ENCODE measurements at regions of chr16 and their contacts with region 1.

Region 1: GRCh38 chr16:69754469-69755310 is at the start of gene NOB1:
- DNase-seq: peak; percentile 95
- H3K4me3 ChIP-seq: peak within 1 kb of the TSS; percentile 100
- H3K27ac ChIP-seq: peak within 1 kb of the TSS; percentile 11
- H3K27me3 ChIP-seq: peaks cover 4% of the 10 kb centered on the region
- CTCF ChIP-seq: peak; percentile 99
- polyA plus RNA-seq, gene NOB1: 58.7 TPM in 2 replicates

Region 2: DNA sequence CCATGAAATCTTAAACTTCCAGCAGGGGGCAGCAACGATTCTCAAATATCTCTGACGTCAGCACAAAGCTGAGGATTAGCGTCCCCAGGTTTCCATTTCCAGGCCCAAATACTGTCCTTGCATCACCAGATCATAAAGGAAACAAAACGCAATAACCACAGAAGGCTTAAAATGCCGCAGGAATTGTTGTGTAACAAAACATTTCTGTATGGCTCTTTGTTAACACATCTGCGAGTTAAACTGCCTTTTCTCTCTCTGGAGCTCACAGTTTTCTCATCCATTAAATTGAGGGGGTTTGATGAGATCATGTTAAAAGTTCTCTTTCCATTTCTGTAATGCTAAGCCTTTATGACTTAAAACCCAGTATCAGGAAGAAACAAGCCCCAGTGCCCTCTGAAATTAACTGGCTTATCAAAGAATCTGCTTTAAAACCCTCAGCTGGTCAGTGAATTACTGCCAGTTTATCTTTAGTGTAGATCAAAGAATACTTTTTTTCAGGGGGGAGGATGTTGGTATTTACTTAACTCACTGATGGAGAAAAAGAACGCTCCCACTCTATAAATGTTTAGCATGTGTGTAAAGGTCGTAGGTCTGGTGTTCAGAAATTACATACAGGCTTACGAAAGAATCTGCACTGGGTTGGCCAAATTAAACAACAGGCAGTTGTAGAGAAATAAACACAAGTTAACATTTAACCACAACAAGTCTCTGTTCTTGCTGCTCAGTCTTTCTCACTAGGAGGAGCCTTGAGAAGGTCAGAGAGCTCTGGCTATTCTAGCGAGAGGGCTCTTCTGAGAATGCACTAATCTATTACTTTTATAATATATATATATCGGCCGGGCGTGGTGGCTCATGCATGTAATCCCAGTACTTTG is 358.3 kb before region 1 on chr16:
- CTCF ChIA-PET with region 1: interaction called, 61 read pairs
- POLR2A ChIA-PET with region 1: interaction called, 8 read pairs
- DNase-seq: peak; percentile 92
- H3K4me3 ChIP-seq: no peak overlapping the region; the same call in none of the 2 replicates
- H3K27ac ChIP-seq: peak overlapping the region; percentile 82
- H3K27me3 ChIP-seq: no peaks in the 10 kb centered on the region
- CTCF ChIP-seq: peak; percentile 59

Region 3: DNA sequence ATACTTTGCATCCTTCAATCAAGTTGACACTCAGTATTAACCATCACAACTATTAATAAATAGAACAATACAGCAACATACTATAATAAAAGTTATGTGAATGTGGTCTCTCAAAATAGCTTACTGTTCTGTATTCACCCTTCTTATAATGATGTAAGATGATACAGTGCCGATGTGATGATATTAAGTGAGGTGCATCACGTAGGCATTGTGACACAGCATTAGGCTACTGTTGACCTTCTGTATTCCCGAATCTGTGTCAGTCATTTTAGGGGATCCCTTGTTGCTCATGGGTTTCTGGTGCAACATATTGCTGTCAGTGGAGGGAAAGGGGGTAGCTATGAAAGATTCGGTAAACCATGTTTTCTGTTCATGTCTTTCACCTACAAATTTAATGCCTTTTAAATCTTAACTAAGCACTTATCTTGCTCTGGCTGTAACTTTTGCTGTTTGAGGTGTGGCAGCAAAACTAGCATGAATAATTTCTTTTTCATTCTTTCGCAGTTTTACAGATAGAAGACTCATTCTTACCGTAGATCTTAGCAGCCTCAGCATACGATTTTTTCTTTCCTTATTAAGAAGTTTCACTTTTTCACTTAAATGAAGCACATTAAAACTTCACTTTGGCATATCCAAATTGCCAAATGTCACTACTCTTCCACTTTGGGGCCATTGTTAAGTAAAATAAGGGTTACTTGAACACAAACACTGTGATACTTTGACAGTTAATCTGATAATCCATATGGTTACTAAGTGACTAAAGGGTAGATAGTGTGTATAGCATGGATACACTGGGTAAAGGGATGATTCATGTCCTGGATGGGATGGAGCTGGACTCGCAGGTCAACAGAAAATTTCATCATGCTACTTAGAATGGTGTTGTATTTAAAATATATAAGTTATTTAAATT is 159.3 kb before region 1 on chr16:
- CTCF ChIA-PET with region 1: no interaction called
- POLR2A ChIA-PET with region 1: no interaction called
- DNase-seq: no peak
- H3K4me3 ChIP-seq: no peak overlapping the region
- H3K27ac ChIP-seq: no peak overlapping the region
- H3K27me3 ChIP-seq: no peaks in the 10 kb centered on the region
- CTCF ChIP-seq: no peak

Region 4: DNA sequence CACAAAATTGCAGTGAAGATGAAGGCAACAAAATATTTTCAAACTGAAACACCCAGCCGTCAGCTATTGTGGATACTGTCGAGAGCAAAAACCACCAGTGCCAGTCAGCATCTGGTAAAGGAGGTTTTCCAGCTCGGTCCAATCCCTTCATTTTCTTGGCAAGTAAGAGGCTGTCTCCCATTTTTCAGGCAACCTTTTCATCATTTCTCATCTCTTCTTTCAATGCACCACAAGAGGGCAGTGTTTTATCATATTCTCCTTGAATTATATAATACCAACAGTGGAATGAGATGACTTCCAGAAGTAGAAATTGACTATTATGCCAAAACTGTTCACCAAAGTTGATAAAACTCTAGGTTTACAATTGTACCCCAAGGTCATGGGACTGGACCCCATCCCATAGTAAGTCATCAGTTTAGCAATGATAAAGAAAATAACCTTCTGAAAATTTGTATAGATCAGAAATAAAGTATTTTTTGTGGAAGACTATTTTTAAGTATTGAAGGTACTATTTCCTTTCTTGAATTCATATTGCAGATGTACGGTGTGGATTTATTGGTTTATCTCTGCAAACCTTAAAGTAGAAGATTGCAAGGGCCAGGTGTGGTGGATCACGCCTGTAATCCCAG is 45.1 kb before region 1 on chr16:
- CTCF ChIA-PET with region 1: interaction called, 33 read pairs
- POLR2A ChIA-PET with region 1: interaction called, 4 read pairs
- DNase-seq: no peak
- H3K4me3 ChIP-seq: no peak overlapping the region
- H3K27ac ChIP-seq: no peak overlapping the region
- H3K27me3 ChIP-seq: no peaks in the 10 kb centered on the region
- CTCF ChIP-seq: peak; percentile 60

Region 5: DNA sequence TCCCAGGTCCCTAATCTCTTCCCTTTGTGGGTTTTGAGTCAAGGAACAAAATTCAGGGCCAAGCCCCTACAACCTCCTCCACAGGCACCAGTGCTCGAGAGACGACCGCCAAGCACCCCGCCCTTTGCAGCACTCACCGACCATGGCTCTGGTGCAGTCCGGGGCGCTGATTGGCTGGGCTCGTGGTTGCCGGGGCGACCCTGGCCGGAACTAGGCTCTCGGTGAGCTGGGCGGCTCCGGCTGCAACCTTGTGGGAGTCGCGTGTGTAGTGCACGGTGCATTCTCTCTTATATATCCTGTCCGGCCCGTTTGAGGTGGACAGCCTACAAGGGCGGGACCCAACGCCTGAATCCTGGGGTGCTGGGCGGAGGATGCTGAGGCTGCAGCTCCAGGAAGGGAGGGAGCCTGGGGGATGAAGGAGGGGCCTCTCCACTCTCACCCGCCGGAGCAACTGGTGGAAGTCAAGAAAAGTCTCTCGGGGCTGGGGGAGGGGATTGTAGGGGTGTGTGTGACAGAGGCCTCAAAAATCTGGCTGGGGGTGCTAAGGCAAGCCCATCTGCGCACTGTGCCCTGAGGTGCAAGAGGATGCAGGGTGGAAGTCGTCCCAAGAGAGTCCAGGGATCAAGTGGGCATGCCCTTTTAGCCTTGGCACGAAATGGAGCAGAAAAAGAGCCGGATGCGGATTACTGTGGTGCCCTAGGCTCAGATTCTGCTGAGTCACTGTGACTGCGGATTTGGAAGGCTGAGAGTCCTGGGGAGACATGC is 28.2 kb before region 1 on chr16 and contains the start of gene NQO1:
- CTCF ChIA-PET with region 1: interaction called, 5 read pairs
- POLR2A ChIA-PET with region 1: interaction called, 18 read pairs
- DNase-seq: peak; percentile 97
- H3K4me3 ChIP-seq: peak within 1 kb of the TSS; percentile 80
- H3K27ac ChIP-seq: peak within 1 kb of the TSS; percentile 99
- H3K27me3 ChIP-seq: no peaks in the 10 kb centered on the region
- CTCF ChIP-seq: no peak
- polyA plus RNA-seq, gene NQO1: 557 and 580 TPM in 2 replicates

Region 6: DNA sequence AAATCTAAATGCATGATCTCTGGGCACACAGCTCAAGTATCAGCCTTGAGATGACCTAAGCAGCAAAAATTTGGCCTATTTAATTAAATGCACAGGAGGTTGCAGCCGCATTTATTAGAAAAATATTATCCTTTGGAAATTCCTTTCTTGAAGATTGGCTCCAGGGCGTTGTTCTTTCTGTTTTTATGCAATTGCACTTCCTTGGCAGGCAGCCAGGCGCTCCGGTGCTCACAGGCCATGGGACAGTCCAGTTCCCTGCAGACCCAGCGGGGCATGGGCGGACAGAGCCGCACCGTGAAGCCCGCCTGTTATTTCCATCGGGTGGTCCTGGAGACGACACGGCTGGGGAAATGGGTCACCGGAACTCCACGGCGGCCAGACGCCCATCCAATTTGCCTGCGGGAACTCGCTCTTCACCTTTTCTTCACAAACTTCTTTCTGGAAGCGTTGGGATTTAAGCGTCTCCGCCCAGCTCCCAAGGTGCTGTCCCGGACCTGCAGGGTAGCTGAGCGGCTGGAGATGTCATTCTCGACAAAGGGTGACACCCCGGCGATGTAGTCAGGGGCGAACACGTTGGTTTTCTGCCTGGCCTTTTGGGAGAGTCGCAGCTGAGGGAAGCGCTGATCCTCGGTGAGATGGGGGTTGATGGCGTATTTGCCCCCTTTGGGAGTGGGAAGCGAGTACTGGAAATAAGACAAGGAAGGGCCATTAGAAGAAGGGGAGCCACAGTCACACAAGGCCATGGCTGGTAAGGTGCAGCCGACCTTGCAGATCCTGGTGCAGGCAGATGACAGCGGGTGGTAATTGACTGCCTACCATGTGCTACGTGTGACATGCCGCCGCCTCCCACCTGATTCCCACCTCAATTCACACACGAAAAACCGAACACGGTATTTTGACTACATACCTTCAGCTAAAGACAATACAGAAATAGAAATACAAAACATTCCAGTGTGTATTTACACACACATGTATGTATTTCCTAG is 12.5 kb before region 1 on chr16:
- CTCF ChIA-PET with region 1: interaction called, 24 read pairs
- POLR2A ChIA-PET with region 1: interaction called, 7 read pairs
- DNase-seq: no peak
- H3K4me3 ChIP-seq: no peak overlapping the region
- H3K27ac ChIP-seq: peak overlapping the region; percentile 52
- H3K27me3 ChIP-seq: no peaks in the 10 kb centered on the region
- CTCF ChIP-seq: no peak

Region 7: DNA sequence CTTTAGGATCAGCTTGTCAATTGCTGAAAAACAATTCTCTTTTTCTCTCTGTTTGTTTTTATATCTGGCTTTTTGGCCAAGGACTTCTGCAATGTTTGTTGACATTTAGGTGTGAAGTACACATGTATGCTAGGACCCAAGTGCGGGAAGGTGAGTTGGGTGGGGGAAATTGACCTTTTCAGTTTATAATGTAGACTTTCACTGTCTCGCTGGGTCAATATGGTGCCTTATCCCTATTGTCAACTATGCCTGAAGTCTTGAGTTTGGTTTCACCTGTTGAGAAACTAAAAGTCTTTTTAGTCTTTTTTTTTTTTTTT is 16.9 kb after region 1 on chr16:
- CTCF ChIA-PET with region 1: interaction called, 11 read pairs
- POLR2A ChIA-PET with region 1: no interaction called
- DNase-seq: no peak
- H3K4me3 ChIP-seq: no peak overlapping the region
- H3K27ac ChIP-seq: no peak overlapping the region
- H3K27me3 ChIP-seq: no peaks in the 10 kb centered on the region
- CTCF ChIP-seq: no peak

Measured in AG04450 (cell line).